Mammary epithelial cell (primary cell): ENCODE measurements at regions of chr9 and their contacts with region 1.

Region 1: DNA sequence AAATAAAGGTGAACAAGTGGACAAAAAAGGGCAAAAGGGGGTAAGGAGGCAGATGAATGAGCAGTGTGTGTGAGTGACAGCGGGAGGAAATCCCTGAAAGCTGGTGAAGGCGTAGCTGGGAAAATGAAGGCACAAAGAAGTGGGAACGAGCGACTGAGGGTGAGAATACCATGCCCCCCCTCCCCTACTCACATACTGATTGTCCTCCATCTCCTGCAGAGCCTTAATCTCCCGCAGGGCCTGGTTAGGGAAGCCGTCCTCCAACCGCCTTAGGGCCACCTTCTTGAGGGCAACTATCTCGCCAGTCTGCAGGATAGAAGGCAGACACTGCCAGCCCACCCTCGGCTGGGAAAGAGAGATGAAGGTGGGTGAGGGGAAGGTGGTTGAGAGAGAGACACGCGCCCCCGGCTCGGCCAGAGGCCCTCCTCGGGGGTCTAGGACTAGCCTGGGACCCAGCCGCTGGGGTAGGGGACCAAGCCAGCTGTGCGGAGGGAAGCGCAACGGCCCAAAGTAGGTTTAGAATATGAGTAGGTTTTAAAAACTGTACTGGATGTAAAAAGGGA is 522 bp downstream of the CDK20 start:
- DNase-seq: peak; percentile 6
- H3K4me3 ChIP-seq: peak overlapping the region; percentile 54 to 81 (median 71)
- H3K27ac ChIP-seq: peak overlapping the region; percentile 64
- H3K4me1 ChIP-seq: peaks cover 6% of the 10 kb centered on the region
- H3K27me3 ChIP-seq: no peaks in the 10 kb centered on the region
- CTCF ChIP-seq: no peak

Region 2: DNA sequence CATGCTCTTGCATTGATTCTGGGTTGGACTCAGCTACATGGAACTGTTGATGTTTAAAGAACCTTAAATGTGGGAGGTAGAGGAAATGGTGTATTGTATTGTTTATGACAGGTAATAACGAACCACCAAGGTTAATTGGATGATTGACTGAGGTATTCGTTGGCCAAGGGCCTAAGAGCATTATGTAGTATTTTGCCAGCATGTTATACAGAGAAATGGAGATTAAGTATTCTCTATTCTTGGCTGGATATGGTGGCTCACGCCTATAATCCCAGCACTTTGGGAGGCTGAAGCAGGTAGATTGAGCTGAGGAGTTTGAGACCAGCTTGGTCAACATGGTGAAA is 59.5 kb after region 1 on chr9:
- CTCF ChIA-PET with region 1: no interaction called
- dilution Hi-C with region 1: loop called (anchors 5 kb)
- in situ Hi-C with region 1: no loop called
- intact Hi-C with region 1: no loop called
- DNase-seq: no peak
- H3K4me3 ChIP-seq: no peak overlapping the region
- H3K27ac ChIP-seq: no peak overlapping the region
- H3K4me1 ChIP-seq: no peaks in the 10 kb centered on the region
- H3K27me3 ChIP-seq: no peaks in the 10 kb centered on the region
- CTCF ChIP-seq: no peak